PC-9 (cell line): ENCODE measurements at regions of chr5 and their contacts with region 1.

Region 1: DNA sequence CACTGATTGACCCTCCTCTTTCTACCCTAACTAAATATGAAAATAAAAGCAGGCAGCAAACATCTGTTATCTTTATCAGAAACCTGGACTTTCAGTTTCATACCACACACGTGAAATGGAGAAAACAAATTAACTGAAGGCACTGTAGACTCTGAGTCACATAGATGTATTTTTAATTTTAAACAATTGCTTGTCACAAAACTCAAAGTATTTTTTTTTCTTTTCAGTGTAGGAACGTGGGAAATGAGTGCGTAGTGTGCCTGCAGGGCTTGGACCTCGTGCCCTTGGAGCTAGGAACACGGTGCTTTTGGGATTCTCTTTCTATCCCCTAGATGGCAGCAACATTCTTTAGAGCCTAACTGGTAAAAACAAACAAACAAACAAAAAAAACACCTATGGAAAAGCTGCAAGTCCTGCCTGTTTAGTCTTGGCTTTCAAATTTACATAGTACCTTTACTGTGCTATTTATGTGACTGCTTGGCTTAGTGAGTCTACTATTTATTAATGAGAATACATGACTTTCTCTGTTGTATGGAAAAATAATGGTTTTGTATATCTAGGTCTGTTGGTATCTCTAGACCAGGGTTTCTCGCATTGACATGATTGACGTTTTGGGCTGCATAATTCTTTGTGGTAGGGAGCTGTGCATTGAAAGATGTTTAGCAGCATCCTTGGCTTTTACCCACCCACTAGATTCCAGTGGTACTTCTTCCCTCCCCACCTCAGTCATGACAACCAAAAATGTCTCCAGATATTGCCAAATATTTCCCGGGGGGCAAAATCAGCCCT is 16.8 kb upstream of the ACTBL2 start:
- DNase-seq: peak; percentile 50 to 84
- H3K4me3 ChIP-seq: peak overlapping the region; percentile 18; the same call in 1 of the 2 replicates
- H3K27ac ChIP-seq: peak overlapping the region; percentile 74
- H3K4me1 ChIP-seq: peaks cover 34% of the 10 kb centered on the region
- H3K27me3 ChIP-seq: no peaks in the 10 kb centered on the region
- CTCF ChIP-seq: peak; percentile 84

Region 2: GRCh38 chr5:56512313-56512996 is 987.0 kb before region 1 on chr5:
- CTCF ChIA-PET with region 1: no interaction called
- POLR2A ChIA-PET with region 1: no interaction called
- intact Hi-C with region 1: no loop called
- DNase-seq: no peak
- H3K4me3 ChIP-seq: no peak overlapping the region
- H3K27ac ChIP-seq: no peak overlapping the region
- H3K4me1 ChIP-seq: peaks cover 41% of the 10 kb centered on the region
- H3K27me3 ChIP-seq: no peaks in the 10 kb centered on the region
- CTCF ChIP-seq: no peak

Region 3: GRCh38 chr5:57383093-57383861 is 116.2 kb before region 1 on chr5:
- CTCF ChIA-PET with region 1: no interaction called
- POLR2A ChIA-PET with region 1: no interaction called
- intact Hi-C with region 1: loop called (anchors 1 kb)
- DNase-seq: peak; percentile 62 to 89
- H3K4me3 ChIP-seq: no peak overlapping the region; the same call in 1 of the 2 replicates
- H3K27ac ChIP-seq: peak overlapping the region; percentile 84
- H3K4me1 ChIP-seq: peaks cover 30% of the 10 kb centered on the region
- H3K27me3 ChIP-seq: no peaks in the 10 kb centered on the region
- CTCF ChIP-seq: no peak

Region 4: GRCh38 chr5:57650360-57651069 is 151.1 kb after region 1 on chr5:
- CTCF ChIA-PET with region 1: interaction called, 13 read pairs
- POLR2A ChIA-PET with region 1: interaction called, 3 read pairs
- intact Hi-C with region 1: loop called (anchors 1 kb)
- DNase-seq: peak in 1 of 2 experiments; percentile 70
- H3K4me3 ChIP-seq: no peak overlapping the region
- H3K27ac ChIP-seq: no peak overlapping the region
- H3K4me1 ChIP-seq: no peaks in the 10 kb centered on the region
- H3K27me3 ChIP-seq: no peaks in the 10 kb centered on the region
- CTCF ChIP-seq: peak; percentile 59

Region 5: DNA sequence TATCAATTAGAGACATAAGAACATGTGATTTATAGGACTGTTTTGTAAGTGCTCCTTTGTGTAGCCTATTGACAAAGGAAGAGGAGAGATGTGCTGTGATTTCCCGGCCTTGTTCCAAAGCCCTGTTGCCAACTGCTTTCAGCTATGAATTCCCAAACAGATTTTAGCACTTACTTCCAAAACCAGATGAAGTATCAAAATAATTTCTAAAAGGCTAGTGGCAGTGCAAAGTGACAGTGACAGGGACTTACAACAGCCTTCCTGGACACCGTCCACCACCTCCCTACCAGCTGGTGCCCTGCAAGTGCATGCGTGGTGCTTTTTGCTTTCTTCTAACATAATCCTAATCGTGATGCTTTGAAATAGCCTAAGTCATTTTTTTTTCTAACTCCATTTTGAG is 237.3 kb after region 1 on chr5:
- CTCF ChIA-PET with region 1: no interaction called
- POLR2A ChIA-PET with region 1: interaction called, 5 read pairs
- intact Hi-C with region 1: loop called (anchors 1 kb)
- DNase-seq: no peak
- H3K4me3 ChIP-seq: no peak overlapping the region
- H3K27ac ChIP-seq: peak overlapping the region; percentile 92
- H3K4me1 ChIP-seq: peaks cover 49% of the 10 kb centered on the region
- H3K27me3 ChIP-seq: no peaks in the 10 kb centered on the region
- CTCF ChIP-seq: no peak

Region 6: DNA sequence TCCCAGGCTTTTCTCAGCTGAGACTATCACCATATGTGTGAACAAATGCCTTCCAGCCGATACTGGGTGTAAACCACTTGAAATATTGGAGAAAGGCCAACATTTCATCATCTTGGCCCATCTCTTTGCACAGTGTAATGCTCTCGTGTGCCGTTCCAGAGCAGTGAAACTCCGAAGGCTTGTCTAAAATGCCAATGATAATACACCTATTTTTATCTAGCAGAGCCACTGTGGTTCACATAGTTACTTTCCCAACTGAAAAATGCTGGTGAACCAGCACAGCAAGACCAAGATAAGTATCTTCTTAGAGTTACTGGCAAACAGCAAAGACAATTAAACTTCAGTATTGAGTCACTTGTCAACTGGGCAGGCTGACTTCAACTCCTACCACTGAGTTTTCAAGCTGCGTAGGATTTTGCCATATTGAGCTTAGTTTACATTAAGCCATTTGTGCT is 363.0 kb after region 1 on chr5:
- CTCF ChIA-PET with region 1: no interaction called
- POLR2A ChIA-PET with region 1: no interaction called
- intact Hi-C with region 1: loop called (anchors 1 kb)
- DNase-seq: peak; percentile 69 to 97
- H3K4me3 ChIP-seq: no peak overlapping the region
- H3K27ac ChIP-seq: peak overlapping the region; percentile 99
- H3K4me1 ChIP-seq: peaks cover 31% of the 10 kb centered on the region
- H3K27me3 ChIP-seq: no peaks in the 10 kb centered on the region
- CTCF ChIP-seq: no peak